Cardiac septum (tissue), 1 donor: ENCODE measurements at regions of chr10 and their contacts with region 1.

Region 1: GRCh38 chr10:59337201-59337652 is 25.1 kb downstream of the FAM13C start:
- DNase-seq: no peak

Region 2: GRCh38 chr10:59245686-59246085 is 91.5 kb before region 1 on chr10:
- intact Hi-C with region 1: no loop called
- DNase-seq: no peak

Region 3: DNA sequence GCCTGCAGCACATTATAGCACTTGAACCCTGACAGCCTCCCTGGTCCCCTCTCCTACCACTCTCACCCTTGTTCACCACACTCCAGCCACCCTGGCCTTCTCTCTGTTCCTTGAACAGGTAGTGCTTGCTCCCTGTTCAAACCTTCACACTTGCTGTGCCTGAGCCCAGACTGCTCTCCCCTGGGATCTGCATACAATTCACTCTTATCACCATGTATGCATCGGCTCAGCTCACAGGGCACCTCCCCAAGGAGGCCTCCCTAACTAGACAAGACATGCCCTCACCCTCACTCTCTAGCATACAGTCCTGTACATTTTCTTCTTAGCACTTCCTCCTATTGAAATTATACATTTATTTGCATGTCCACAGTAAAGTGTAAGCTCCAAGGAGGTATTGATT is 34.2 kb before region 1 on chr10:
- intact Hi-C with region 1: loop called (anchors 1 kb)
- DNase-seq: no peak

Region 4: DNA sequence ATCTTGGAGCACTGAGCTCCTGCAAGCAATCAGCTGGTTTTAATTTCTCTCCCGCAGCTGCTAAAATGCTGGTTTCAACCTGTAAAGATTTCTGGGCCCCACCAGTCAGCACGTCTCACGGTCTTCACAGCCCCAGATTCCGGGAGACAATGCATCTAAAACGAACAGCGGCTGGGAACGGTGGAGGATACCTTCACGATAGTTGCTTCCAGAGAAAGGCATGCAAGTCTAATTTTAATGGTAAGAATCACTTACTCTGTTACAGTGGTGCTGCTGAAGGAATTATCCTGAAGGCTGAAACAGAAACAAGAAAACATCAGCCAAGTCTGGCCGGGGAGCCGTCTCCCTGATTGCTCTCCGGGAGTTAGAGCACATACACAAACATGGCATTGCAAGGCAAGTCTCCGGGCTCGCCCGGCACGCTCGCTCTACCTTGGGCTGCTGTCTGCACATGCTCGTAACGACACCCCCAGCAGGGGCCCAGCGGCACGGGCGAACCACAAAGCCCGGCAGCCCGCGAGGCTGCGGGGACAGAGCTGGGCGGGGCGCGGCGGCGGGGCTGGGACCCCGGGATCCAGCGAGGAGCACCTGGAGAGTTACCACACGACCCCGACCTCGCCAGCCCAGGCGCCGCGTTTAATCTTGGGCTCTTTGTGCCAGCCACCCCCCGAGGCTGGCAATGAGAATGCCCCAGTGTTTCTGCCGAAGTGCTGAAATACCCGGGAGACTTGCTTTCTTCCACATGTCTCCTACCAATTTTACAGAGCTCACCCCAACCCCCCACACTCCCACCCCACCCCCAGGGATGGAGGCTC is 25.1 kb after region 1 on chr10 and contains the start of gene FAM13C:
- intact Hi-C with region 1: no loop called
- DNase-seq: peak; percentile 83
- total RNA-seq, gene FAM13C: 7.5 TPM

Region 5: GRCh38 chr10:59536167-59536930 is 199.1 kb after region 1 on chr10:
- intact Hi-C with region 1: no loop called
- DNase-seq: no peak